ENCODE measurements at regions of chr11 and their contacts with region 1.

Region 1: DNA sequence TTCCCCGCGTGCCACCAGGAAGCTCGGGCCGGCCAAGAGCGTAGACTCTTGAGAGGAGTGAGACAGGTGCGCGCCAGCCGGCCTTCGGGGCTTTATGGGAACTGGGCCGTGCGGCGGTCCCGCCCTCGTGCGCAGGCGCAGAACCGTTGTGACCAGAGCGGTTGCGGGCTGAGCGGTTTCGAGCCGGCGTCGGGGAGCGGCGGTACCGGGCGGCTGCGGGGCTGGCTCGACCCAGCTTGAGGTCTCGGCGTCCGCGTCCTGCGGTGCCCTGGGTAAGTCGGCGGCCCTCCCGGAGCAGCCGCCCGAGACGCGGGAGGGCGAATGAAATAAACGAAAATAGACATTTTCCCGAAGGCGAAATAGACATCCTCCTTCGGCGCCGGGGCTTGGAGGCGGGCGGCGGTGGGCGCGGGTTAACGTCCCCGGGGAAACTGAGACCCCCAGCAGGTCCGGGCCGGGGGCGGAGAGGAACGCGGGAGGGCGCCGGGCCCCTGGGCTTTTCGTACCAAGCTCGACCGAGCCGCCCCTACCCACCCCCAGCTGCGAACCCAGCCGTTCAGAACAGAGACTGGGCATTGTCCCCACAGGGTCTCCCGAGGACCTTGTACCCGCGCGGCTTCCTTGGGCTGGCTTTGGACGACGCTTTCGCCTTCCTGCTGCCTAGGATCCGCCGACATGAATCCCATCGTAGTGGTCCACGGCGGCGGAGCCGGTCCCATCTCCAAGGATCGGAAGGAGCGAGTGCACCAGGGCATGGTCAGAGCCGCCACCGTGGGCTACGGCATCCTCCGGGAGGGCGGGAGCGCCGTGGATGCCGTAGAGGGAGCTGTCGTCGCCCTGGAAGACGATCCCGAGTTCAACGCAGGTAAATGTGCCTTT is at the start of gene ASRGL1:
- DNase-seq: peak; percentile 95
- ATAC-seq: peak; percentile 88
- total RNA-seq, gene ASRGL1: 4.7 TPM

Region 2: DNA sequence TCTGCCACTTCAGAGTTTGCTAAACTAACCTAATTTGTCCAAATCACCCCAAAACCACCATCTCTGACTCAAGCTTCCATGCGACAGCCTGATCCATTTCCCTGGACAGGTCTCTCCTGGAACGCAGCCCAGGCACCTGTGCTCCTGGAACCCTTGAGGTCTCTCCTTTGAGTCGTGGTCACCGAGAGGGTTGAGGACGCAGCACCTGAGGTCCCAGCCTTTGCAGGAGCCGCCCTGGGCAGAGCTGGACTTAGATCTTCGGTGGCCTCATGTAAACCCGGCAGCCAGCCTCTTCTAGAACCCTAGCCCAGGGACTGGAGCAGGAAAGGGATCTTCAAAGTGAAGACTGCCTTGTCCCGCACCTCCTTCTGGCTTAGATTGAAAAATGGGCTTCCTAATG is 37.3 kb after region 1 on chr11:
- intact Hi-C with region 1: loop called (anchors 5 kb)
- DNase-seq: no peak
- ATAC-seq: no peak

Measured in Right ventricle myocardium inferior (tissue), 1 donor.